ENCODE measurements at regions of chr19 and their contacts with region 1.

Region 1: GRCh38 chr19:32405431-32406161 is at the start of gene DPY19L3:
- DNase-seq: peak; percentile 95
- H3K4me3 Mint-ChIP-seq: peak within 1 kb of the TSS; percentile 84
- H3K27ac Mint-ChIP-seq: peak within 1 kb of the TSS; percentile 91
- H3K4me1 Mint-ChIP-seq: peaks cover 12% of the 10 kb centered on the region
- H3K27me3 Mint-ChIP-seq: no peaks in the 10 kb centered on the region
- total RNA-seq, gene DPY19L3: 12.4 to 14.9 TPM

Region 2: GRCh38 chr19:32333227-32333626 is 72.4 kb before region 1 on chr19:
- CTCF ChIA-PET with region 1: no interaction called
- POLR2A ChIA-PET with region 1: no interaction called
- intact Hi-C with region 1: no loop called
- DNase-seq: no peak
- H3K4me3 Mint-ChIP-seq: no peak overlapping the region
- H3K27ac Mint-ChIP-seq: no peak overlapping the region
- H3K4me1 Mint-ChIP-seq: no peaks in the 10 kb centered on the region
- H3K27me3 Mint-ChIP-seq: peaks cover 2% of the 10 kb centered on the region

Region 3: GRCh38 chr19:32345261-32346207 is 60.1 kb before region 1 on chr19 and contains the start of gene ZNF507:
- CTCF ChIA-PET with region 1: no interaction called
- POLR2A ChIA-PET with region 1: interaction called, 9 read pairs
- intact Hi-C with region 1: loop called (anchors 2 kb)
- DNase-seq: peak; percentile 90
- H3K4me3 Mint-ChIP-seq: peak within 1 kb of the TSS; percentile 97
- H3K27ac Mint-ChIP-seq: peak within 1 kb of the TSS; percentile 84
- H3K4me1 Mint-ChIP-seq: peaks cover 42% of the 10 kb centered on the region
- H3K27me3 Mint-ChIP-seq: peaks cover 3% of the 10 kb centered on the region
- total RNA-seq, gene ZNF507: 20.8 to 21.0 TPM

Region 4: DNA sequence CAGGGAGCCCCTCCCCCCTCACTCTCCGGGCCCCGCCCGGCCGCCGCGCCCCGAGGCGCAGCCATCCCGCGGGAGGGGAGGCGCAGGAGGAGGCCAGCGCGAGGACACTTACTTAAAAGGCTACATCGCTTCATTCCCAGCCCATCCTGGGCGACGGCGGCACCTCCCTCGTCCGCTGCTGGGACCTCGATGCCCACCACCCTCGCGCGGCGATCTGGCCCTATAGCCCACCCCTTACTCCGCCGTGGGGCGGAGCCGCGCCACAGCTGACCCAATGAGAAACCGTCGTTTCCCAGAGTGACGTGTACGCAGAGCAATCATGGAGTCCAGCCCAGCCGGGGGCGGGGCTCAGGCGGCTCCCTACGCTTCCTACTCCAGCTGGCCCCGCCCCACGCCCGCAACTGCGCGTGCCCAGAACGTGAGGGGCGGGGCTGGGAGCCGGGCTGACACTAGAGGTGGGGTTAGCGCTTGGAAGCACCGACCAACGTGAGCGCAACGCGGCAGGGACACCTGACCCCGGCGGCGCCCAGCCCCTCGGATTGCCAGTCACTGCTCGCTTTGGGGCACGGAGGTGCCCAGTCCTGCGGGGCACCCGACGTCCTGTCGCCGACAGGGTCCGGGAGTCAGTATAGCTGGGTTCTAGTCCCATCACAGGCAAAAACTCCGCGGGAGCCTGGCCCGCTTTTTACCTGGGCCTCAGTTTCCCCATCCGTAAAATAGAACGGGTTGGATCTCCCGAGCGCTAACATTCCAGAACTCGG is 269.5 kb after region 1 on chr19 and contains the start of gene ANKRD27:
- CTCF ChIA-PET with region 1: no interaction called
- POLR2A ChIA-PET with region 1: no interaction called
- intact Hi-C with region 1: loop called (anchors 1 kb)
- DNase-seq: peak; percentile 98
- H3K4me3 Mint-ChIP-seq: peak within 1 kb of the TSS; percentile 92
- H3K27ac Mint-ChIP-seq: peak within 1 kb of the TSS; percentile 67
- H3K4me1 Mint-ChIP-seq: peaks cover 28% of the 10 kb centered on the region
- H3K27me3 Mint-ChIP-seq: peaks cover 11% of the 10 kb centered on the region
- total RNA-seq, gene ANKRD27: 39.7 to 45.4 TPM